Esophagus squamous epithelium (tissue), 5 donors: ENCODE measurements at regions of chr4 and their contacts with region 1.

Region 1: GRCh38 chr4:110211007-110211769 is 12.8 kb upstream of the ELOVL6 start:
- DNase-seq: no peak
- H3K4me3 ChIP-seq: no peak overlapping the region
- H3K27ac ChIP-seq: no peak overlapping the region
- H3K4me1 ChIP-seq: peaks cover 0 to 4% (median 0%) of the 10 kb centered on the region in 3 donors
- H3K27me3 ChIP-seq: no peaks in the 10 kb centered on the region
- CTCF ChIP-seq: peak; percentile 57 to 72 (median 66)
- POLR2A ChIP-seq: no peak

Region 2: GRCh38 chr4:110049951-110050925 is 160.9 kb before region 1 on chr4:
- intact Hi-C with region 1: loop called (anchors 10 kb)
- DNase-seq: no peak
- H3K4me3 ChIP-seq: no peak overlapping the region
- H3K27ac ChIP-seq: no peak overlapping the region
- H3K4me1 ChIP-seq: peaks cover 0 to 4% (median 0%) of the 10 kb centered on the region in 3 donors
- H3K27me3 ChIP-seq: no peaks in the 10 kb centered on the region
- CTCF ChIP-seq: peak; percentile 60 to 78 (median 72)
- POLR2A ChIP-seq: no peak

Region 3: GRCh38 chr4:110639207-110640090 is 428.3 kb after region 1 on chr4:
- intact Hi-C with region 1: no loop called
- DNase-seq: no peak
- H3K4me3 ChIP-seq: no peak overlapping the region
- H3K27ac ChIP-seq: no peak overlapping the region
- H3K4me1 ChIP-seq: peaks cover 0 to 18% (median 3%) of the 10 kb centered on the region in 3 donors
- H3K27me3 ChIP-seq: peaks cover 6 to 100% (median 10%) of the 10 kb centered on the region in 4 donors
- CTCF ChIP-seq: no peak
- POLR2A ChIP-seq: no peak